ENCODE measurements at regions of chr4 and their contacts with region 1.

Region 1: DNA sequence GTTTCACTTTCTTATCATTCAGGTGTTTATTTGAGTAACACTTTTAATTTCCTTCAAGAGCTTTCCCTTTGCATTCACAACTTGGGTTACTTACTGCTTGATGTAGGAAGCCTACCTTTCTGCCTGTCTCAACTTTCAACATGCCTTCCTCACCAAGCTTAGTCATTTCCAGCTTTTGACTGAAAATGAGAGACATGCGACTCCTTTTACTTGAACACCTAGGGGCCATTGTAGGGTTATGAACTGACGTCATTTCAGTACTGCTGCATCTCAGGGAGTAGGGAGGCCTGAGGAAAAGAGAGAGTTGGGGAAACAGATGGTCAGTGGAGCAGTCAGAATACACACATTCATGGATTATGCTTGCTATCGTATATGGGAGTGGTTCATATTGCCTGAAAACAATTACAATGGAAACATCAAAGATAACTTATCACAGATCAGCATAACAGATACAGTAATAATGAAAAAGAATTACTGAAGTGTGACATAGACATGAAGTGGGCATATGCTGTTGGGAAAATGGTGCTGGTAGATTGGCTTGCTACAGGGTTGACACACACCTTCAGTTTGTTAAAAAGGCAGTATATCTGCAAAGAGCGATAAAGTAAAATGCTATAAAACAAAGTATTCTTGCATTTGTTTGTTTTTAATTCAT is 25.7 kb downstream of the USP53 start:
- DNase-seq: peak; percentile 31
- H3K4me3 Mint-ChIP-seq: peak overlapping the region; percentile 8
- H3K27ac Mint-ChIP-seq: peak overlapping the region; percentile 29
- H3K4me1 Mint-ChIP-seq: peaks cover 29% of the 10 kb centered on the region
- H3K27me3 Mint-ChIP-seq: no peaks in the 10 kb centered on the region

Region 2: DNA sequence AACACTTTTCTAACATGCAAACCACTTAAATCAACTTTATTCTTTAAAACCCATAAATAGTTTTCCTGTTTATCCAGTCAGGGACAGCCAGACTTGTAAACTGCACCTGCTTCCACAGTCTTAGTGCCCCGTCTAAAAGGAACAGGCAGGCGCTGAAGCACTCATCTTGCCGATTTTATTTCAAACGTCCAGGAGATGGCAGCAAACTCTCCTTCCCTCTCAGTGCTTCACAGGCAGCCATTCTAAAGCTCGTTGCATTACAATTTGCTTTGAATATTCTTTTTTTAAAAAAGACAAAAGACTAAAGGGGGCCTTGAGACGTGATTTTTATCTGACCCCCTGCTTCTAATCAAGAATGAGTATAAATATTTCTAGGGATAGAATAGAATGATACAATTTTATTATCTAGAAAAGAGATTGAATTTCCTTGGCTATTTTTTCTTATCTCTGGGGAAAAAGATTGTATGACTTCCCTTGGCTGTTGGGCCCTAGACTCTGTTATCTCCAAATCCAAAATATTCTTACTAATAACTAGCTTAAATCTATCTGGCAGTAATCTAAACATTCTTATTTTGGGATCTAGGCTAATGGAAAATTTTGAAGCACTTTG is 196.1 kb before region 1 on chr4:
- intact Hi-C with region 1: loop called (anchors 1 kb)
- DNase-seq: peak; percentile 40
- H3K4me3 Mint-ChIP-seq: no peak overlapping the region
- H3K27ac Mint-ChIP-seq: no peak overlapping the region
- H3K4me1 Mint-ChIP-seq: peaks cover 6% of the 10 kb centered on the region
- H3K27me3 Mint-ChIP-seq: no peaks in the 10 kb centered on the region

Region 3: DNA sequence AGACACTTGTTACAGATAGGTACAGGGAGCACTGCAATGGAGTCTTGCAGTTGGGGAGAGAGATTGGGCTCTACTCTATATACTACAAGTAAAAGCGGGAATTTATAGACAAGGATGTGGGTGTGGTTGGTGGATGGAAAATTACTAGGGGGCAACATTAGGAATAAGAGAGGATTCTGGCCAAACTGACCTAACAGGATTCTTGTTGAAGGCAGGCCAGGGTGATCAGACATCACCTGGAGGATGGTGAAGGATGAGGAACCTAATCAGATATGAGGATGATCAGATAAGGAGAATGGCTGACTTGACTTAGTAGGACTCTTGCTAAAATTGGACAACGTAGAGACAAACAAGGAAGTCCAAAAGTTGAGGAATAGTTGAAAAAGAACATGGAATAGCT is 17.4 kb before region 1 on chr4:
- intact Hi-C with region 1: no loop called
- DNase-seq: no peak
- H3K4me3 Mint-ChIP-seq: no peak overlapping the region
- H3K27ac Mint-ChIP-seq: no peak overlapping the region
- H3K4me1 Mint-ChIP-seq: no peaks in the 10 kb centered on the region
- H3K27me3 Mint-ChIP-seq: no peaks in the 10 kb centered on the region

Region 4: DNA sequence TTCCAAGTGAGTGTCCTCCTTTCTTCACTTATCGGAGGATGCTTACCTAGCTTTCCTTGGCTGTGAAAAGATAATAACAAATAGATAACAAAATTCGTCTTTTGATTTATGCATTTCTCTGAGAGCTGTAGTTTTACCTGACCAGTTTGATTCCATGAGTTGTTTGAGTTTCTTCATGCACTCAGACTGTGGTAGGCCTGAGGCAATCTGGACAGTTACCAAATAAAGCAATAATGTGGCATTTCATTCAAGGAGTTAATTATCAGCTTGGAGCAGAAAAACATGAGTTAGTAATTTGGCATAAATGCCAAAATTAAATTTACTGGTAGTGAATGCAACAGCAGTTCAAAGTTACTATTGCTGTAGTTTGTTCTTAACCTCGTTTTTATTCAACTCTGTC is 30.3 kb after region 1 on chr4:
- intact Hi-C with region 1: loop called (anchors 1 kb)
- DNase-seq: no peak
- H3K4me3 Mint-ChIP-seq: no peak overlapping the region
- H3K27ac Mint-ChIP-seq: no peak overlapping the region
- H3K4me1 Mint-ChIP-seq: peaks cover 8% of the 10 kb centered on the region
- H3K27me3 Mint-ChIP-seq: no peaks in the 10 kb centered on the region

Region 5: GRCh38 chr4:119300101-119300978 is 62.1 kb after region 1 on chr4:
- intact Hi-C with region 1: loop called (anchors 1 kb)
- DNase-seq: peak; percentile 93
- H3K4me3 Mint-ChIP-seq: peak overlapping the region; percentile 97
- H3K27ac Mint-ChIP-seq: peak overlapping the region; percentile 97
- H3K4me1 Mint-ChIP-seq: peaks cover 38% of the 10 kb centered on the region
- H3K27me3 Mint-ChIP-seq: no peaks in the 10 kb centered on the region